BJ (cell line): ENCODE measurements at regions of chr2 and their contacts with region 1.

Region 1: DNA sequence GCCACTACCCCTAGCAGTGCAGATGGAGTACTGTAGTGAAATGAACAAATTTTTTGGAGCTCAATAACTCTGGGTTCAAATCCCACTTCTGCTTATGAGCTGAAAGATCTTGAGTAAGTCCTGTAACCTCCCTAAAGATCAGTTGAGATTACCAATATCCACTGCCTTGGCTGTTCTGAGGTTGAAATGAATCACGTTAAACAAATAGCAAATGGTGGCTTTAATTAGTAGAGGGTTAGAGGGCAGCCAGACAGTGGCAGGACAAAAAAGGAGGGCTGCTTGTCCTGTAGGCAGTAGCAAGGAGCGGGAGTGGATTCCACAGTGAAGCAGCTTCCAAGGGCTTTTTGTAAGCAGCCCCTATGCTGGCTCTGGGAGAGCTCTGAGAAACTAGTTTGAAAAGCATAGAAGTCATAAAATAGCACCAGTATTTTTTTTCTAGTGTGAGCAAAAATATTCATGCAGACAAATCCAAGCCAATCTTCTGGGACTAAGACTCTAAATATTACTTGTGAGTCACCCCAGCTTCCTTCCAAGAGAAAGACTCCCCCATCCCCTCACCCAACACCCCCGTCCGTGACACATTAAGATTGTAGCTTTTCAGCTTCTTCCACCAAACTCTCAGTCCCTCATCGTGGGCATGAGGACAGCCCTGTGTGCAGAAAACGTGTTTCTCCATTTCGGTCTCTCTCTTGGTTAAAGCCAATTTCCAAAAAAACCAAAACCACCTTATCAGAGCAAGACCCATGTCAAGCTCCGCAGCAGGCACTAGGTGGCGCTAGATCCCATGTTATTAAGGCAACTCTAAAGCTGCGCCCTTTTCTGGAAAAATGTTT is 123.5 kb upstream of the LGALSL start:
- DNase-seq: peak; percentile 29
- H3K4me3 ChIP-seq: peak overlapping the region; percentile 25
- H3K27me3 ChIP-seq: no peaks in the 10 kb centered on the region; the same call in 1 of the 2 replicates
- CTCF ChIP-seq: peak; percentile 89

Region 2: GRCh38 chr2:64311948-64312621 is 18.4 kb before region 1 on chr2:
- CTCF ChIA-PET with region 1: interaction called, 34 read pairs
- POLR2A ChIA-PET with region 1: no interaction called
- DNase-seq: peak; percentile 62
- H3K4me3 ChIP-seq: no peak overlapping the region
- H3K27me3 ChIP-seq: peaks cover 15% of the 10 kb centered on the region
- CTCF ChIP-seq: peak; percentile 71

Region 3: DNA sequence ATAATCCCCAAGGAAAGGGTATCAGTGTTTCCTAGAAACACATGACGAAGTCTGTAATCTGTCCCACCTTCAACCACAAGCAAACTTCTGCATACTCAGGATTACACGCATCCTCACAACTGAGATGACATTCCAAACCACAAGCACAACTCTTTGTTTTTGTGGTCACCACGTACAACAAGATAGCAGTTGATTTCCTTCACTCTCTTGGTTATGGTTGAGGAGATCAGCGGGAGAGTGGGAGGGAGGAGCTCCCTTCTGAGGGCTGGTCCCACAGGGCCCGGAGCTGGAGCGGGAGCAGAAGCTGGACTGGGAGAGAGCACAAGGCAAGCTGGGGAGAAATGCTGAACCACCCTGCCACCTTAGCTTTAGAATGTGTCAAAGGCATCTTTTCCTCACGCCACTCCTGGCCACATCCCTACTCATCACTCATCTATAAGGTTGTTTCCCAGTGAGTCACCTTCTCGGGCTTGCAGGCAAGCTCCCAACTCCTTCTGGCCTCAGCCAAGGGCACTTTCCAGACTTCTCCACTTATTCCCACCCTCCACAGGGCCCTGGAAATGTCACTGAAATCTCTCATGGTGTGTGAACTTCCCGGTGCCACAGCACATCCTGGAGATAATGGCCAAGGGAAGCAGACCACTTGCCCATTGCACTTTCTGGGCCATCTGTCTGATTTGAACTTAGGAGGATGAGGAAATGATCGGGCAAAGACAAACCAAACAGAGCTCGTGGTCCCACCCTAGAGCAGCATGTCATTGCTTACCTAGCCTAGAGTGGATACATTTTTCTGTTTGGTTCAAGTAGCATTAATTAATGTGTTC is 24.6 kb after region 1 on chr2:
- CTCF ChIA-PET with region 1: interaction called, 10 read pairs
- POLR2A ChIA-PET with region 1: no interaction called
- DNase-seq: peak; percentile 3
- H3K4me3 ChIP-seq: no peak overlapping the region
- H3K27me3 ChIP-seq: peaks cover 16% of the 10 kb centered on the region
- CTCF ChIP-seq: no peak

Region 4: GRCh38 chr2:64488050-64488974 is 157.8 kb after region 1 on chr2:
- CTCF ChIA-PET with region 1: interaction called, 158 read pairs
- POLR2A ChIA-PET with region 1: no interaction called
- DNase-seq: no peak
- H3K4me3 ChIP-seq: no peak overlapping the region
- H3K27me3 ChIP-seq: peaks cover 8% of the 10 kb centered on the region
- CTCF ChIP-seq: peak; percentile 85

Region 5: GRCh38 chr2:64523666-64524603 is 193.4 kb after region 1 on chr2 and contains the start of gene AFTPH:
- CTCF ChIA-PET with region 1: interaction called, 30 read pairs
- POLR2A ChIA-PET with region 1: interaction called, 3 read pairs
- DNase-seq: peak; percentile 93
- H3K4me3 ChIP-seq: peak within 1 kb of the TSS; percentile 73
- H3K27me3 ChIP-seq: peaks cover 6% of the 10 kb centered on the region
- CTCF ChIP-seq: no peak
- polyA plus RNA-seq, gene AFTPH: 10.9 and 21.7 TPM in 2 replicates